PC-9 (cell line): ENCODE measurements at regions of chr11 and their contacts with region 1.

Region 1: DNA sequence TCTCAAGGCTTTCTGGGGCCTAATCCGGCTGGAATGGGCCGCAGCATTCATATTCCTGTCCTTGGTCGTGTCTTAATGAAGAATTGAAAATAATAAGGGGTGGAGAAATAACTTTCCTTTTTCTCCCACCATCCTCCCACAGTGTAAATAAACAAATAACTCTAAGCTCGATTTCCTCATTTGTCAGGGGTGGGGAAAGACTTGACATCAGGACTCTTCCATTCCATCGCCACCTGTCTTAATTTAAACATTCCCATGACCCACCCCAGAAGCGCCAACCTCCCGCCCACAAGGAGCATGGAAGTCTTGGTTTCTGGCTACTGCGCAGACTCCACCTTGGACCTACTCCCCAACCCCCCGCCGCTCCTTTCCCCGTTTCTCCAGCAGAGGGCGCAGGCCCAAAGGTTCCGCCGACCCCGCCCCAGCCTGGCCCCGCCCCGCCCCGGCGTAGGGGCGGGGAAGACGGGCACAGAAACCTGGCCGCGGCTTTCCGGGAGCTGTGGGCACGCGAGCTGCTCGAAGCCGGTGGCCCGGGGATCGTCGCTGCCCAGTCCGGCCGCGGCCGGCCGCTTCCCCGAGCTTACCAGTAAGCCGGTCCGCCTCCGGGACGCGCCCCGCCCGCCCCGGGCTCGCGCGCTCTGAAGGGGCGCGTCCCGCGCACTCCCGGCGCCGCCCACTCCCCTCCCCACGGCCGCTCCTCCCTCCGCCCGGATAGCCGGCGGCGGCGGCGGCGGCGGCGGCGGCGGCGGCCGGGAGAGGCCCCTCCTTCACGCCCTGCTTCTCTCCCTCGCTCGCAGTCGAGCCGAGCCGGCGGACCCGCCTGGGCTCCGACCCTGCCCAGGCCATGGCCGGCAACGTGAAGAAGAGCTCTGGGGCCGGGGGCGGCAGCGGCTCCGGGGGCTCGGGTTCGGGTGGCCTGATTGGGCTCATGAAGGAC is at the start of gene CBL:
- DNase-seq: peak; percentile 81 to 90
- H3K4me3 ChIP-seq: peak within 1 kb of the TSS; percentile 90
- H3K27ac ChIP-seq: peak within 1 kb of the TSS; percentile 57
- H3K4me1 ChIP-seq: peaks cover 26% of the 10 kb centered on the region
- H3K27me3 ChIP-seq: no peaks in the 10 kb centered on the region
- CTCF ChIP-seq: peak; percentile 94
- total RNA-seq, gene CBL: 26.3 and 32.9 TPM in 2 replicates

Region 2: DNA sequence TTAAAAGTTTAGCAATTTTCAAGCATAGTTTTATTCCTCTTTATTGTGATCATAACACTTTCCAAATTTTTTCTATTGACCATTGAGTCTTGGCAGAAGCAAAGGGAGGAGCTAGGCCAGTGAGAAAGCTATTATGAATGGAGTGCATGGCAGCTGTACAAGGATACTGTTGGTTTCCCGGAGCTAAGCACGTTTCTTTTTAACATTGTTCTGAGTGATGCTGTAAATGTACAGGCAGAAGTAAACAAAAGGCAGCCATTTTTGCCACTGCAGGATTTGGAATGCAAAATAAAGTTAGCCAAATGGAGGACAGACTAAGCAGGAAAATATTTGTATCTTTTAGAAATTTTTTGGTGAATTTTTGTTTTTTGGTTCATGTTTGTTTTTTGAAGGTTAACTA is 16.5 kb after region 1 on chr11:
- CTCF ChIA-PET with region 1: interaction called, 14 read pairs
- POLR2A ChIA-PET with region 1: interaction called, 5 read pairs
- intact Hi-C with region 1: no loop called
- DNase-seq: no peak
- H3K4me3 ChIP-seq: no peak overlapping the region
- H3K27ac ChIP-seq: peak overlapping the region; percentile 16
- H3K4me1 ChIP-seq: peaks cover 28% of the 10 kb centered on the region
- H3K27me3 ChIP-seq: no peaks in the 10 kb centered on the region
- CTCF ChIP-seq: no peak

Region 3: DNA sequence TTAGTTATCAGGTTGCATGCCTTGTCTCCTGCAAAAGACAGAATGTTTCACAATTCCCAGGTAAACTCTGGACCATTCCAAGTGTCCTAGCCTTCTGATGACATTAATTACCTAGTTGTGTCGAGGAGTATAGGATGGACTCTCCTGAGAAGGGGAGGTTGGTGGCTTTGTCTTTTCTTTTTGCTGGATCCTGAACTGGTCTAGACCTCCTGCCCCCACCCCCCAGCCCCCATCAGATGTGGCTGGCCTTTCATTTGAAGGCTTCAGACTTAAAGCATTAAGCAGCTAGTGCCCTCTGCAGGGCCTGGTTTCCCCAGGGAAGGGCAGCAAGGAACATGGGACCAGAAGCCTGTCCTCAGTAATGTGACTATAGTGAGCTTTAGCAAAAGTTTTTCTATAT is 101.4 kb after region 1 on chr11:
- CTCF ChIA-PET with region 1: interaction called, 10 read pairs
- POLR2A ChIA-PET with region 1: interaction called, 21 read pairs
- intact Hi-C with region 1: no loop called
- DNase-seq: no peak
- H3K4me3 ChIP-seq: no peak overlapping the region
- H3K27ac ChIP-seq: no peak overlapping the region
- H3K4me1 ChIP-seq: no peaks in the 10 kb centered on the region
- H3K27me3 ChIP-seq: no peaks in the 10 kb centered on the region
- CTCF ChIP-seq: no peak

Region 4: GRCh38 chr11:119421941-119422808 is 216.3 kb after region 1 on chr11:
- CTCF ChIA-PET with region 1: no interaction called
- POLR2A ChIA-PET with region 1: no interaction called
- intact Hi-C with region 1: no loop called
- DNase-seq: no peak
- H3K4me3 ChIP-seq: no peak overlapping the region
- H3K27ac ChIP-seq: no peak overlapping the region
- H3K4me1 ChIP-seq: 0 out of 2 replicates have a peak, but pooled peaks cover 3% of the 10 kb centered on the region
- H3K27me3 ChIP-seq: no peaks in the 10 kb centered on the region
- CTCF ChIP-seq: no peak

Region 5: GRCh38 chr11:119474682-119475596 is 269.1 kb after region 1 on chr11:
- CTCF ChIA-PET with region 1: interaction called, 11 read pairs
- POLR2A ChIA-PET with region 1: no interaction called
- intact Hi-C with region 1: loop called (anchors 5 kb)
- DNase-seq: peak; percentile 64 to 75
- H3K4me3 ChIP-seq: no peak overlapping the region
- H3K27ac ChIP-seq: peak overlapping the region; percentile 34; the same call in 1 of the 2 replicates
- H3K4me1 ChIP-seq: peaks cover 19% of the 10 kb centered on the region
- H3K27me3 ChIP-seq: no peaks in the 10 kb centered on the region
- CTCF ChIP-seq: peak; percentile 98